Activated T-helper 1 cell treated with anti-CD3 and anti-CD28 coated beads, Interleukin-12 subunit alpha, Interleukin-12 subunit beta, Interleukin-2, Interleukin-4 antibody, amounts not matched to agents 30 ng/mL and 10 ng/mL and 1 ng/mL, durations not matched to agents 14 hours and 24 hours and 36 hours (primary cell): ENCODE measurements at regions of chr5 and their contacts with region 1.

Region 1: DNA sequence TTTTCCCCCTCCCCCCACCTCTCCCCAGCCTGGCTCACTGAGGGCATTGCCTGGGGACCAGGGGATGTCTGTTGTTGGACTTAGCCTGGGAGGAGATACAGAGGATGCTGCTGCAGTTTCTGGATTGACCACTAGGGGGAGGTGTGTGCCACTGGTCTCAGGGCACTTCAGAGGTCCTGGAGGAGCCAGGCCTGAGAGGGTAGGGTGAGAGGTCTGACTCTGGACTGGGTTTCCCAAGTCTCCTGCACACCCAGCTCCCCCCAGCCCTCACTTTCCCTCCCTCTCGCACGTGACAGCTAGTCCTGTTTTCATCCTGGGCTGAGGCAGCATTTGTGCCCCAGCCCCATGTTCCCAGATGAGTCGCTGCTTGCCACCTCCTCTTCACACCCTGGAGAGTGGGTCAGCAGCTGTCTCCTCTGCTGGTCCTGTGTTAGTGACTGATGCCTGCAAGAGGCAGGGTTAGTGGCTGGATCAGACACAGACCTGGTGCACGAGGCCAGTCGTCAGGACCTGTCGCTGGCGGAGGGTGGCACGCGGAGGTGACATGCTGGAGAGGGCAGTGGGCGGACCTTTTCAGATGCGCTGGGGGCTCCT is 4.4 kb downstream of the IL3 start:
- DNase-seq: peak; percentile 70
- H3K4me3 Mint-ChIP-seq: no peak overlapping the region
- H3K27ac Mint-ChIP-seq: peak overlapping the region; percentile 83
- H3K4me1 Mint-ChIP-seq: peaks cover 83% of the 10 kb centered on the region
- H3K27me3 Mint-ChIP-seq: peaks cover 3% of the 10 kb centered on the region

Region 2: GRCh38 chr5:131589510-131590348 is 475.1 kb before region 1 on chr5:
- intact Hi-C with region 1: loop called (anchors 1 kb)
- DNase-seq: no peak
- H3K4me3 Mint-ChIP-seq: no peak overlapping the region
- H3K27ac Mint-ChIP-seq: no peak overlapping the region
- H3K4me1 Mint-ChIP-seq: peaks cover 39% of the 10 kb centered on the region
- H3K27me3 Mint-ChIP-seq: peaks cover 1% of the 10 kb centered on the region

Region 3: DNA sequence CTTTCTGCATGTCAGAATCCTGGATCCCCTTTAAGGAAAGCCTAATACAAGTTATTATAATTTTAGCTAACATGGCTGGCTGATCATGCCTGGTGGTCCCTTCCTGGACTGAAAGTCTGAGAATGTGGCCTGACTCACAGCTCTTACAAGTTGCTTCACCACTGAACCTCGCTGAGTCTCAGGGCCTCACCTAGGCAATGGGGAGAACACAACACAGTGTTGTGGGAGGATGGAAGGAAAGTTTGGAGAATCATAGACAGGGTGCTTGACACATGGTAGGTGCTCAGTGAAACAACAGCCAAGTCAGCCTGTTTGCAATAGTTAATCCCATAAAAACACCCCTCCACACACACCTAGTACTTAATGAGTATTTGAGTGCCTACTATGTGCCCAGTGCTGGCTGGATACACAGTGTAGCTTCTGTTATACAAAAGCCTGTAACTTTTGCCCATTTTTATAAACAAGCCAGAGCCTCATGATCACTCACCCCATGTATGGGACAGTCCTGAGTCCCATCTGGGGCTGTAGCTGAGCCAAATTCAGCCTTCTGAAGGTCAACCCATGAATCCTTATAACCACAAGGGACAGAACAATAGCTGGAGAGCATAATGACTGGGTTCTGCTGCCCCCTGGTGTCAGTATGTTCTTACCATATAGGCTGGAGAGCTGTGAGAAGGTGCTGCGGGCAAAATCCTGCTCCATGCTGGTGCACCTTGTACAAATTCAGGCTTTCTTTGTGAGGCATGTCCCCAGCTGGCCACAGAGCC is 57.3 kb before region 1 on chr5:
- intact Hi-C with region 1: loop called (anchors 1 kb)
- DNase-seq: peak; percentile 67
- H3K4me3 Mint-ChIP-seq: peak overlapping the region; percentile 7
- H3K27ac Mint-ChIP-seq: peak overlapping the region; percentile 35
- H3K4me1 Mint-ChIP-seq: peaks cover 44% of the 10 kb centered on the region
- H3K27me3 Mint-ChIP-seq: peaks cover 41% of the 10 kb centered on the region

Region 4: DNA sequence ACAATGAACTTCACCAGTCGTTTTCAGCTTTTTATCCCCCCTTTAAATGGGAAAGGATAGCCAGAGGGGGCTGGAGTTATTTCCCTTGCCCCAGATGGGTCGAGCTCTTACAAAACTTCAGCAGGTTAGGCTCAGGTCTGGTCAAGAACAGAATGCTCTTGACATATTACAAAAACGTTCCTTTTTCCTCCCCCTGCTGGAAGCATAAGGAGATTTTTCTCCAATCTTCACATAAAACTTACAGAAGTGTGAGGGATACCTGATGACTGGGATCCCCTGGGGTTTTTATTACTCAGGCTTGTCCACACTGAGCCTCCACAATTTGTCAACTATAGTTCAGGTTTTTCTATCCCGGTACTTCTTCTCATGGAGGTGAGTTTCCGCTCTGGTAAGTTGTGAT is 69.5 kb after region 1 on chr5:
- intact Hi-C with region 1: loop called (anchors 1 kb)
- DNase-seq: no peak
- H3K4me3 Mint-ChIP-seq: no peak overlapping the region
- H3K27ac Mint-ChIP-seq: no peak overlapping the region
- H3K4me1 Mint-ChIP-seq: peaks cover 32% of the 10 kb centered on the region
- H3K27me3 Mint-ChIP-seq: peaks cover 17% of the 10 kb centered on the region

Region 5: GRCh38 chr5:132238169-132238744 is 173.4 kb after region 1 on chr5:
- intact Hi-C with region 1: loop called (anchors 1 kb)
- DNase-seq: peak; percentile 59
- H3K4me3 Mint-ChIP-seq: no peak overlapping the region
- H3K27ac Mint-ChIP-seq: no peak overlapping the region
- H3K4me1 Mint-ChIP-seq: peaks cover 6% of the 10 kb centered on the region
- H3K27me3 Mint-ChIP-seq: peaks cover 4% of the 10 kb centered on the region

Region 6: GRCh38 chr5:132369474-132370180 is 304.8 kb after region 1 on chr5 and contains the start of gene SLC22A5:
- intact Hi-C with region 1: loop called (anchors 5 kb)
- DNase-seq: peak; percentile 66
- H3K4me3 Mint-ChIP-seq: peak within 1 kb of the TSS; percentile 81
- H3K27ac Mint-ChIP-seq: peak within 1 kb of the TSS; percentile 70
- H3K4me1 Mint-ChIP-seq: peaks cover 33% of the 10 kb centered on the region
- H3K27me3 Mint-ChIP-seq: no peaks in the 10 kb centered on the region
- total RNA-seq, gene SLC22A5: 4.3 and 6.2 TPM in 2 replicates

Region 7: DNA sequence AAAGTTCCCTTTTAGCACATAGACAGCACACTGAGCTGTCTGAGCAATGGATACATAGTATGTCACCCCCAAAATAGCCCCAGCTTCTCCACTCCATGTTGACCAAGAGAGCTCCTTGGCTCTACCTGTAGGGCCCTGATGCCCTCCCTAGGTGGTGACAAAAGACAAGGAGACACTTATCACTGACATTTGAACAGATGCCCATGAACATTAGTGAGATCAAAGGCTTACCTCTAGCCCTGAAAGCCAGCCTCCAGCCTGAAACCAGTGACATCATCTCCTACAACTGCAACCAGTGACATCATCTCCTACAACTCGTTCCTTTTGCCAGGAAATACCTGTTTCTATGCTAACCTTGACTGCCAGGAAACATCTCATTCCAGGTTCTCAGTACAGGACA is 1424.8 kb after region 1 on chr5:
- intact Hi-C with region 1: no loop called
- DNase-seq: no peak
- H3K4me3 Mint-ChIP-seq: no peak overlapping the region
- H3K27ac Mint-ChIP-seq: no peak overlapping the region
- H3K4me1 Mint-ChIP-seq: no peaks in the 10 kb centered on the region
- H3K27me3 Mint-ChIP-seq: no peaks in the 10 kb centered on the region